Endothelial cell of umbilical vein (primary cell): ENCODE measurements at regions of chr2 and their contacts with region 1.

Region 1: DNA sequence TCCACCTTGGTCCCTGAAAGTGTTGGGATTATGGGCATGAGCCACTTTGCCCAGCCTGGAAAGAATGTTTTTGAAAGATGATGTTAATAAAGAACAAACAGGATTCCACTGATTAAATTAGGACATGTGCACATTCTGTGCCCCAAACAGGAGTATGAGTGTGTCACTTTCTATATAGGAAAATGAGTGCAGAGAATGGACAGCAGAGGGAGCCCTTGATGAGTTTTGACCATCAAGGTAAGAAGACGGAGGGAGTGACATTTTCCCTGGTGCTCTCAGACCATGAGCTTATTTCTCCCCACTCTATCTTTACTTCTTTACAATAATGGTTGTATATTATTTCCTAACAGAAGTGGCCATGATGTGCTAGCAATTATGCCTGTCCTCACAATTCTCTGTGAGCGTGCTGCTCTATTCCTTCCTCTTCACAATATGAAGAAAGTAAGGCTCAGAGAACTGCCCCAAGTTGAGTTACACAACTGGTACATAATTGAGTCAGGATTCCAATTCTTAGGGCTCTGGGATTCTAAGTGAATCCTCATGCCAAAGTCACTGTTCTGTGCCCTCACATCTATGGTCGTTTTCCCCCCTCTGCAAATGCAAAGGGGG is 20.6 kb downstream of the RPL37A start:
- DNase-seq: peak; percentile 77
- H3K4me3 ChIP-seq: no peak overlapping the region
- H3K27ac ChIP-seq: no peak overlapping the region
- H3K4me1 ChIP-seq: no peaks in the 10 kb centered on the region
- H3K27me3 ChIP-seq: no peaks in the 10 kb centered on the region
- CTCF ChIP-seq: peak; percentile 64 to 66
- POLR2A ChIP-seq: no peak

Region 2: GRCh38 chr2:216001216-216002100 is 517.8 kb before region 1 on chr2:
- CTCF ChIA-PET with region 1: no interaction called
- POLR2A ChIA-PET with region 1: no interaction called
- dilution Hi-C with region 1: no loop called
- intact Hi-C with region 1: no loop called
- DNase-seq: no peak
- H3K4me3 ChIP-seq: no peak overlapping the region
- H3K27ac ChIP-seq: no peak overlapping the region
- H3K4me1 ChIP-seq: peaks cover 6% of the 10 kb centered on the region
- H3K27me3 ChIP-seq: peaks cover 0 to 2% of the 10 kb centered on the region in 2 experiments
- CTCF ChIP-seq: no peak
- POLR2A ChIP-seq: no peak

Region 3: GRCh38 chr2:216535454-216535995 is 16.3 kb after region 1 on chr2:
- CTCF ChIA-PET with region 1: interaction called, 27 read pairs
- POLR2A ChIA-PET with region 1: no interaction called
- dilution Hi-C with region 1: no loop called
- intact Hi-C with region 1: loop called (anchors 1 kb)
- DNase-seq: peak; percentile 96
- H3K4me3 ChIP-seq: no peak overlapping the region
- H3K27ac ChIP-seq: peak overlapping the region; percentile 66
- H3K4me1 ChIP-seq: peaks cover 36% of the 10 kb centered on the region
- H3K27me3 ChIP-seq: no peaks in the 10 kb centered on the region
- CTCF ChIP-seq: no peak
- POLR2A ChIP-seq: peak; percentile 68

Region 4: DNA sequence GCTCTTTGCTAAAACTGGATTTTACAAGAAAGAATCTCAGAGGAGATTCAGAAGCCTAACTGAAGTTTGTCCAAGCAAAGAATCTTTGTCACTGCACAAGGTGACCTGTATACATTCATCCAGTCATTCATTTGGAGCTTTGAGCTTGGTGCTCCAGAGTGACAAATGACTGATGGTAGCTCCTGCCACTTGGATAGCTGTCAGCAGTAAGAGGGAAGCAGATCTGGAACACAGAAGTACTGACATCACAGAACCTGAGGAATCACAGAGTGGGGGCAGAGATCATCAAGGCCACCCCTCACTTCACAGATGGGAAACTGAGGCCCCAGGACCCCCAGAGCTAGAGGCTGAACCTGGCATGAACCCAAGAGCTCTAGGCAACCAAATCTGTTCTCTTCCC is 85.2 kb after region 1 on chr2:
- CTCF ChIA-PET with region 1: interaction called, 11 read pairs
- POLR2A ChIA-PET with region 1: no interaction called
- dilution Hi-C with region 1: no loop called
- intact Hi-C with region 1: no loop called
- DNase-seq: no peak
- H3K4me3 ChIP-seq: no peak overlapping the region
- H3K27ac ChIP-seq: no peak overlapping the region
- H3K4me1 ChIP-seq: no peaks in the 10 kb centered on the region
- H3K27me3 ChIP-seq: peaks cover 19 to 31% of the 10 kb centered on the region in 2 experiments
- CTCF ChIP-seq: no peak
- POLR2A ChIP-seq: no peak

Region 5: DNA sequence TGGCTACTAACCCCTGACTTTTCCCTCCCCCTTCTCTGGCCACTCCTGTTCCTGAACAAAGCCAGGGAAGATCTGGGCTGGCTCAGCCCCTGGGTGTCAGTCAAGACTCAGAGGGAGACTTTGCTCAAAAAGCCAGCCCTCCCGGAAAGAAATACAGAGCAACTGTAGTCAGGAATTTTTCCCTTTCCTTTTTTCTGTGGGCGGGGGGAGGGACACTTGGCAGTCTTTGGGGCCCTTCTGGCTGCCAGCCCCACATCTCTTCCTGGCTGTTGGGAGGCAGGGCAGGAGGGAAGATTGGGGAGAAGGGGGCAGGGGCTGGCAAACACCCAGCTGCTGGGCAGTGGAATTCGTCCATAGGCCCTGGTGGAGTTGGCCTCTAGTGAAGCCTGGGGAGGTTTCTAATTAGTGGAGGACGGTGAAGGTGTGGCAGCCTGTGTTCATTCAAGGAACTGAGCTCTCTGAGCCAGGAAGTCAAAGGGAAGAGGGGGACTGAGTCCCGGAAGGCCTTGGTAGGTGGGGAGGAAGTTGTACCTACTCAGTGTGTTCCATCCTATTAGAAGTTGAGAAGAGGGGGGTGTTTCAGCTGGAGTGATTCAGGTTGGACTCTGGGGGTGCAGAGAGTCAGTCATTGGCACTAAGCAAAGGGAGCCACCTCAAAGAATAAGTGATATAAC is 124.9 kb after region 1 on chr2:
- CTCF ChIA-PET with region 1: interaction called, 22 read pairs
- POLR2A ChIA-PET with region 1: no interaction called
- dilution Hi-C with region 1: no loop called
- intact Hi-C with region 1: no loop called
- DNase-seq: peak; percentile 50
- H3K4me3 ChIP-seq: no peak overlapping the region
- H3K27ac ChIP-seq: no peak overlapping the region
- H3K4me1 ChIP-seq: peaks cover 12% of the 10 kb centered on the region
- H3K27me3 ChIP-seq: no peaks in the 10 kb centered on the region
- CTCF ChIP-seq: no peak
- POLR2A ChIP-seq: no peak

Region 6: GRCh38 chr2:217510771-217511291 is 991.6 kb after region 1 on chr2:
- CTCF ChIA-PET with region 1: interaction called, 13 read pairs
- POLR2A ChIA-PET with region 1: no interaction called
- dilution Hi-C with region 1: no loop called
- intact Hi-C with region 1: loop called (anchors 1 kb)
- DNase-seq: peak; percentile 74
- H3K4me3 ChIP-seq: no peak overlapping the region
- H3K27ac ChIP-seq: no peak overlapping the region
- H3K4me1 ChIP-seq: no peaks in the 10 kb centered on the region
- H3K27me3 ChIP-seq: no peaks in the 10 kb centered on the region
- CTCF ChIP-seq: peak; percentile 64 to 65
- POLR2A ChIP-seq: no peak